ENCODE measurements at regions of chr18 and their contacts with region 1.

Region 1: DNA sequence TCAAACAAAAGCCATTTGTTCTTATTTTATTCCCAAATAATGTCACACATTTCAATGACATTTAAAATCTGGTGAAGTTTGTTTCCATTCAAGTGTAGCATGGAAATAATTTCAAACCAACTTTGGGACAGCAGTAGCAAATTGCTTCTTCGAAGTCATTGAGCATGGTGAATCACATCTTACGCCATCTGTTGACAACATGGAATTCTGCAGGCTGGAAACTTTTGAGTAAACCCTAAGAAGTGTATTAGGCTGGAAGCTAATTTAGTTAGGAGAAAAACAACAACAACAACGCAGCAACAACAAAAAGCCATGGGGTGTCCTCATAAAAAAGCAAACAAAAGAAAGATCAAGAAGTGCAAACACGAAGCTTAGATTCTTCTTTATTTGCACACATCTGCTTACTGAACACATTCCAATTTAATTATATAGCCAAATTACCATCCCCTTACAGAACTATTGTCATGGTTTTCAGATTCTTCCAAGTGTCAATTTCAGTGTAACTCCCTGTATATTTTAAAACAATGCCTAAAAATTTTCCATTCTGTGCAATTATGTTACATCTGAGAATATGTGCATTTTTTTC is 659.0 kb upstream of the CDH7 start:
- DNase-seq: no peak
- H3K4me3 ChIP-seq: no peak overlapping the region
- H3K27ac ChIP-seq: no peak overlapping the region
- H3K4me1 ChIP-seq: no peaks in the 10 kb centered on the region
- H3K27me3 ChIP-seq: no peaks in the 10 kb centered on the region
- CTCF ChIP-seq: peak in 1 of 2 donors; percentile 23
- POLR2A ChIP-seq: no peak

Region 2: DNA sequence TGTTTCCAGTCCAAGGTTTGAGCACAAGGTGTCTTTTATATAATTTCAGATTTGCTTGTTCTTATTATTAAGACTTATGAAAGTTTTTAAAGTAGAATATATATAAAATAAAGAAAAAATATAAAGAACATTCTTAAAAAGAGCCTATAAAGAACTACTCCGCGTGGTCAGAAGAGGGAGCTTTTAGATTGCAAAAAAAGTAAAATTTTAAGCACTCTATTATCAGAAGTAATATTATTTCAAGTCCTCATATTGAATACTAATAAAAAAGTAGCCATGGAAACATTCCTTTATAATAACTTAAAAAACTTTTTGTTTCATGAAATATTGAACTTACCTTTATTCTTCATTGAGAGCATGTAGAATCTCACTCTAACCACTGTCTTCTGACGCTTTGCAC is 994.3 kb before region 1 on chr18:
- CTCF ChIA-PET with region 1: no interaction called
- POLR2A ChIA-PET with region 1: no interaction called
- dilution Hi-C with region 1: no loop called
- intact Hi-C with region 1: loop called (anchors 10 kb)
- DNase-seq: peak; percentile 7
- H3K4me3 ChIP-seq: no peak overlapping the region
- H3K27ac ChIP-seq: no peak overlapping the region
- H3K4me1 ChIP-seq: no peaks in the 10 kb centered on the region
- H3K27me3 ChIP-seq: no peaks in the 10 kb centered on the region
- CTCF ChIP-seq: no peak
- POLR2A ChIP-seq: no peak

Region 3: DNA sequence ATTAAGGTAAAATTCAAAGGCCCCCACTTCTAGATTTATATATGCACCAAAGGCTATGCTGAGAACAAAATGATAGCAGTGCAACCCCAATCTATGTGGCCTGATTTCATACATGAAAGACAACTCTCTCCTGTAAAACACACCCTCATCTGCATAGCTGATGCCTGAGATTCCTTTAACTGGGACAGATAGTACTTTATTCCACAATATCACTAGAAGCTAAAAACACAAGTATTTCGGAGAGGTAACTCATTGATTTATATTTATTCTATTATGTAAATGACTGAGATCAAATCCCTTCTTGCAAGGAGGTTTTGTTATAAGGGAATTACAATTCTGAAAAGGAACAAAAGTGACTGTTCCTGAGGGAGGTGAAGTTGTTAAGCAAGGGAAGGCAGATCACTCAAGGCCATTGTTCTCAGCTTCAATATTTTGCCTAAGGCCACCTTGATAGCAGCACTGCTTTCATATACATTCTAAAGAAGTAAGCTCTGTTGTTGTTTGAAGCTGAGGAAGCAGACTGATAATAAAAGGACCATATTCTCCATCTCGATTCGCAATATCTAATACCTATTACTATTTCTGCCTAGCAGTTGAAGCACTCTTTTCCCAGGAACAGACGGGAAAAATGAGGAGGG is 187.9 kb after region 1 on chr18:
- CTCF ChIA-PET with region 1: no interaction called
- POLR2A ChIA-PET with region 1: no interaction called
- dilution Hi-C with region 1: no loop called
- intact Hi-C with region 1: no loop called
- DNase-seq: no peak
- H3K4me3 ChIP-seq: no peak overlapping the region
- H3K27ac ChIP-seq: no peak overlapping the region
- H3K4me1 ChIP-seq: no peaks in the 10 kb centered on the region
- H3K27me3 ChIP-seq: no peaks in the 10 kb centered on the region
- CTCF ChIP-seq: no peak
- POLR2A ChIP-seq: no peak

Measured in endothelial cell of umbilical vein (primary cell).